ENCODE measurements at regions of chr2 and their contacts with region 1.

Region 1: GRCh38 chr2:40886660-40887059 is 434.8 kb upstream of the SLC8A1 start:
- DNase-seq: no peak
- ATAC-seq: no peak
- H3K4me3 ChIP-seq: no peak overlapping the region
- H3K4me3 Mint-ChIP-seq: no peak overlapping the region
- H3K27ac ChIP-seq: no peak overlapping the region
- H3K27ac Mint-ChIP-seq: no peak overlapping the region
- H3K4me1 ChIP-seq: no peaks in the 10 kb centered on the region
- H3K4me1 Mint-ChIP-seq: no peaks in the 10 kb centered on the region
- H3K27me3 ChIP-seq: no peaks in the 10 kb centered on the region
- H3K27me3 Mint-ChIP-seq: no peaks in the 10 kb centered on the region

Region 2: DNA sequence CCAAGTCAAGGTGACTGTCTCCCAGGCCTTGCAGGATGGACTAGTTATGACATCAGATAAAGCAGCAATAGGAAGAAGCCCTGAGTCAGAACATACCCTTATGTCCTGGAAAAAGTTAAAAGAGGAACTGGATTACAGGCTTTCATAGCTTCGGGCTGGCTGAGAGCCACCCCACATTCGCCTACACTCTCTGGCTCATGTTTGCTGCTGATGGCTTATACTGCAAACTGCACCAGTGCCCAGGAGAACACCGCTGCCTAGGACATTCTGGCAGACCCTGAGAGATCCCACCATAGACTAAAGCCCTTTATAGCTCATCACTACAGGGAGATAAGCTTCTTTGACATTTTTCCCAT is 455.1 kb before region 1 on chr2:
- CTCF ChIA-PET with region 1: interaction called in 1 of 2 experiments, 12 read pairs
- POLR2A ChIA-PET with region 1: no interaction called
- DNase-seq: no peak
- ATAC-seq: no peak
- H3K4me3 ChIP-seq: no peak overlapping the region
- H3K4me3 Mint-ChIP-seq: no peak overlapping the region
- H3K27ac ChIP-seq: no peak overlapping the region
- H3K27ac Mint-ChIP-seq: no peak overlapping the region
- H3K4me1 ChIP-seq: no peaks in the 10 kb centered on the region
- H3K4me1 Mint-ChIP-seq: no peaks in the 10 kb centered on the region
- H3K27me3 ChIP-seq: no peaks in the 10 kb centered on the region
- H3K27me3 Mint-ChIP-seq: no peaks in the 10 kb centered on the region